Mammary epithelial cell (primary cell): ENCODE measurements at regions of chr14 and their contacts with region 1.

Region 1: DNA sequence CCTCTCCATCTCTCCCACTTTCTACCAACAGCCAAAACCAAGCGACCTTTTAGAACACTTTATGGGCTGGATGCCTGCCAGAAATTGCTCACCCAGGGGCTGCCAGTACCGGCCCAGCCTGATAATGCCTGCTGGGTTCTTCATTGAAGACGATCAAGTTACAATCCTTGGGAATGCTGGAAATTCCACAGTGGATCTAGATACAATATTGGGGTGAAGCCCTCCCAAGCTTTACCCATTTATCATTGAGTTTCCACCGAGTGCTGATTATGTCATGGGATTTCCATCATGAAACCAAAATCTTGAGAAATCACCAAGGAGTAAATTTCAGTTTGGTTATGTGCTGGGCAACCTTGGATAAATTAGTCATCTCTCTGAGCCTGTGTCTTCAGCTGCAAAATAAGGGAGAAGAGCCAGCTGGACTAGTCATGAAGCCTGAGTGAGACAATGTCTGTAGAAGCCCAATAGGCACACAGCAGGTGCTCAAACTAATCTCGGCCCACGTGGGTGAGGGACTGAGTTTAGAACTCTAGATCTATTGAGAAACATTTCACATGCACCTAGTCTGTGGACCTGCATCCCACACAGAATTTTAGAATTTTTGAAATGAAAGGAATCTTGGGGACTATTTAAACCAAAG is 75.5 kb upstream of the CLMN start:
- DNase-seq: peak; percentile 11
- H3K4me3 ChIP-seq: no peak overlapping the region
- H3K27ac ChIP-seq: no peak overlapping the region
- H3K4me1 ChIP-seq: no peaks in the 10 kb centered on the region
- H3K27me3 ChIP-seq: no peaks in the 10 kb centered on the region
- CTCF ChIP-seq: no peak

Region 2: DNA sequence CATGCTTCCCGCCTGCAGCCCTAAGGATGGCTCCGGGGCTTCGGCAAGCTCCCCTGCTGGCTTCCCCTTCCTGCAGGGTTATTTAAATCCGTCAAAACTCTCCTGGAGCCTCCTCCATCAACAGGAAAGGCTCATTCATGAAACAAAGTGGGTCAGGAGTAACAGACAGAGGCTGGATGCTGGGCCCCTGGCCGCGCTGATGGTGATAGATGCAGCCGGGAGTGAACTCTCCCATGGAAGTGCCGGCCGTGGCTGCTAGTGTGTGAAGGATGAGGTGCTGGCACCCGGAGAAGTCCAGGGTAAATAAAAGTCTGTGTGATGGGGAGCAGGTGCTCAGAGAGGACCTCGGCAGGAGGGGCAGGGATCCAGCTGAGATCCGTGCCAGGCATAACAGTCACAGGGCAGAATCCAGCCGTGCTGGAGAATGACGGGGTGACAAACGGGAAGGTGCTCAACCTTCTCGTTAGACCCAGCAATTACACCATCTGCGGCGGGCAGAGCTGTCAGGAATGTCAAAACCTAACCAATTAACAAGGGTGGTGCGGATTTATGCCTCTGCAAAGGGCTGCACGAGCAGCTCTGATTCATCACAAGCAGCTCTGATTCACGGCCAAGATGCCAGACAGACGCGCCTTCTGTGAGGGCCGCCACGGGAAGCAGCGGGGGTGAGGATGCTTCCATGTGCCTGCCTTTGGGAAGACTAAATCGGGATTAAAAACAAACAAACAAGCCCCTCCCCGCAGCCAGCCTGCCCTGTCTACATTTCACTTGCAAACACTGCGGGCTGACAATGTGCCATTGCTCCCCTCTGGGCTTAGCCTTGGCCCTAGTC is 65.6 kb after region 1 on chr14:
- CTCF ChIA-PET with region 1: no interaction called
- dilution Hi-C with region 1: loop called (anchors 5 kb)
- in situ Hi-C with region 1: no loop called
- intact Hi-C with region 1: no loop called
- DNase-seq: no peak
- H3K4me3 ChIP-seq: no peak overlapping the region
- H3K27ac ChIP-seq: no peak overlapping the region
- H3K4me1 ChIP-seq: peaks cover 7% of the 10 kb centered on the region
- H3K27me3 ChIP-seq: no peaks in the 10 kb centered on the region
- CTCF ChIP-seq: no peak